ENCODE measurements at regions of chr3 and their contacts with region 1.

Region 1: DNA sequence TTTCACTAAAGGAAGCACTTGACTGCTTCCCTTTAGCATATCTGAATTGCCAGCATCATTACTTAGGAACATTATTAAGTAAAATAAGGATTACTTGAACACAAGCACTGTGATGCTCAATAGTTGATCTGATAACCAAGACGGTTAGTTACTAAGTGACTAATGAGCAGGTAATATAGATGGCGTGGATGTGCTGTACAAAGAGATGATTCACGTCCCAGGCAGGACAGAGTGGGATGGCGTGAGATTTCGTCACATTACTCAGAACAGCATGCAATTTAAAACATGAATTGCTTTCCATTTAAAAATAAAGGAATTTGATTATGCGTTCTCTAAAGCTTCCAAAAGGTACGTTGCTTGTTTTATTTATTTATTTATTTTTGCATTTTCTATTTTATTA is 240.0 kb upstream of the ARHGEF26 start:
- DNase-seq: no peak
- H3K4me3 ChIP-seq: no peak overlapping the region
- H3K27ac ChIP-seq: no peak overlapping the region
- H3K4me1 ChIP-seq: no peaks in the 10 kb centered on the region
- H3K27me3 ChIP-seq: no peaks in the 10 kb centered on the region
- CTCF ChIP-seq: no peak
- POLR2A ChIP-seq: no peak

Region 2: DNA sequence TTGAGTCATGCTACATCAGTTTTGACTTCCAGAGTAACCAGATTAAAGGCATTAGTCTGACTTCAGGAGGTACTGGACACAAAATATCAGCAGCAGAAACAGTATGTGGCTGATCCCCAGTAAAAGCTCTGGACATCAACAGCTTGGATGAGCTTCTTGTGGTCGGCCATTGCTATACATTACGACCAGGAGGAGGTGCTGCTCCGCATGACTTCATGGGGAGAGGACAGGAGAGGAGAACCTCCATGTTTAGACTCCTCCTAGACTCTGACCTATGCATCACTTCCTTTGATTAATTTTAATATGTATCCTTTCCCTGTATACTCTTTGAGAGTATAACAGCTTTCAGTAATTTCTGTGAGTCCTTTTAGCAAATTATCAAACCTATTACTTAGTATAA is 45.7 kb before region 1 on chr3:
- intact Hi-C with region 1: no loop called
- DNase-seq: no peak
- H3K4me3 ChIP-seq: no peak overlapping the region
- H3K27ac ChIP-seq: no peak overlapping the region
- H3K4me1 ChIP-seq: no peaks in the 10 kb centered on the region
- H3K27me3 ChIP-seq: no peaks in the 10 kb centered on the region
- CTCF ChIP-seq: no peak
- POLR2A ChIP-seq: no peak

Region 3: GRCh38 chr3:154584974-154585373 is 703.8 kb after region 1 on chr3:
- intact Hi-C with region 1: loop called (anchors 5 kb)
- DNase-seq: no peak
- H3K4me3 ChIP-seq: no peak overlapping the region
- H3K27ac ChIP-seq: no peak overlapping the region
- H3K4me1 ChIP-seq: no peaks in the 10 kb centered on the region
- H3K27me3 ChIP-seq: no peaks in the 10 kb centered on the region
- CTCF ChIP-seq: no peak
- POLR2A ChIP-seq: no peak

Measured in breast epithelium (tissue), 4 donors.